ENCODE measurements at regions of chr6 and their contacts with region 1.

Region 1: GRCh38 chr6:40336296-40336695 is 250.9 kb downstream of the LRFN2 start:
- DNase-seq: no peak
- ATAC-seq: no peak
- H3K4me3 Mint-ChIP-seq: no peak overlapping the region
- H3K27ac Mint-ChIP-seq: no peak overlapping the region
- H3K4me1 Mint-ChIP-seq: no peaks in the 10 kb centered on the region
- H3K27me3 Mint-ChIP-seq: peaks cover 2% of the 10 kb centered on the region

Region 2: DNA sequence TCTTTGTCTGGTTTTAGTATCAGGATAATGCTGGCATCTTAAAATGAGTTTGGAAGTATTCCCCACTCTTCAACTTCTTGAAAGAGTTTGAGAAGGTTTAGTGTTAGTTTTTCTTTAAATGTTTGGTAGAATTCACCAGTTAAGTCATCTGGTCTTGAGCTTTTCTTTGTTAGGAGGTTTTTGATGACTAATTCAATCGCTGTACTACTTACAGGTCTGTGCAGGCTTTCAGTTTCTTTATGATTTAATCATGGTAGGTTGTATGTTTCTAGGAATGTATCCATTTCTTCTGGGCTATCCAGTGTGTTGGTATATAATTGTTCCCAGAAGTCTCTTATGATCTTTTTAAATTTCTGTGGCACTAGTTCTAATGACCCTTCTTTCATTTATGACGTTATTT is 35.3 kb after region 1 on chr6:
- CTCF ChIA-PET with region 1: no interaction called
- POLR2A ChIA-PET with region 1: interaction called, 10 read pairs
- intact Hi-C with region 1: no loop called
- DNase-seq: no peak
- ATAC-seq: peak; percentile 72
- H3K4me3 Mint-ChIP-seq: no peak overlapping the region
- H3K27ac Mint-ChIP-seq: peak overlapping the region; percentile 7
- H3K4me1 Mint-ChIP-seq: peaks cover 17% of the 10 kb centered on the region
- H3K27me3 Mint-ChIP-seq: no peaks in the 10 kb centered on the region